ENCODE measurements at regions of chr21 and their contacts with region 1.

Region 1: GRCh38 chr21:25385911-25386474 is 221.3 kb downstream of the MRPL39 start:
- DNase-seq: peak; percentile 77
- ATAC-seq: peak; percentile 84
- H3K4me3 ChIP-seq: no peak overlapping the region
- H3K27ac ChIP-seq: no peak overlapping the region
- H3K4me1 ChIP-seq: no peaks in the 10 kb centered on the region
- H3K27me3 ChIP-seq: no peaks in the 10 kb centered on the region
- CTCF ChIP-seq: peak; percentile 85
- POLR2A ChIP-seq: no peak
- RAD21 ChIP-seq: peak; percentile 90

Region 2: DNA sequence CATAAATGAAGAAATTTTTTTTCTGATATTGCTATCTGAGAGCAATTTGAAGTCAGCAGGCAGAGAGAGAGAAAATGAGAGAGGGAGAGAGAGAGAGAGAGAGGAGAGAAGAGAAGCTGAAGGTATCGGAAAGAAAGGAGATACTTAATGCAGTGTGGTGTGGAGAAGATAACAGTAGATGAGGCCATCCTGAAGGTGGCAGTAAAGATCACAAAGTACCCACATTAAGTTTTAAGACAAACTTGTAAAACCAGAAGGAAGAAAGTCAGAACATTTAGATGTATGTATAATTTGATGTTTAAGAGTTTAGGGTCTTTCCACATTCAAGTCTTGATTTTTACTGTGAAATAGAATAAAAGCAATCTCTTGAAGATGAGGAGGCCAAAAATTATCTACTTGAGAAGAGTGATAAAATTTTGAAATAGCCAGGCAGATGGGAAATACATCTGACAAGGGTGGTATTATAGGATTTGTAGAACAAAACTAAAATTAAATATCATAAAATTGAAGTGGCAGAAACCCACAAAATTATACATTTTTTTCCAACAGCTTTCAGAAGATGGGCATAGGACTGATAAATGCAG is 1532.1 kb before region 1 on chr21:
- CTCF ChIA-PET with region 1: no interaction called
- POLR2A ChIA-PET with region 1: no interaction called
- dilution Hi-C with region 1: no loop called
- in situ Hi-C with region 1: no loop called
- intact Hi-C with region 1: loop called (anchors 10 kb)
- DNase-seq: peak; percentile 31
- ATAC-seq: peak; percentile 66
- H3K4me3 ChIP-seq: no peak overlapping the region
- H3K27ac ChIP-seq: no peak overlapping the region
- H3K4me1 ChIP-seq: no peaks in the 10 kb centered on the region
- H3K27me3 ChIP-seq: no peaks in the 10 kb centered on the region
- CTCF ChIP-seq: peak; percentile 51
- POLR2A ChIP-seq: no peak
- RAD21 ChIP-seq: peak; percentile 50

Region 3: DNA sequence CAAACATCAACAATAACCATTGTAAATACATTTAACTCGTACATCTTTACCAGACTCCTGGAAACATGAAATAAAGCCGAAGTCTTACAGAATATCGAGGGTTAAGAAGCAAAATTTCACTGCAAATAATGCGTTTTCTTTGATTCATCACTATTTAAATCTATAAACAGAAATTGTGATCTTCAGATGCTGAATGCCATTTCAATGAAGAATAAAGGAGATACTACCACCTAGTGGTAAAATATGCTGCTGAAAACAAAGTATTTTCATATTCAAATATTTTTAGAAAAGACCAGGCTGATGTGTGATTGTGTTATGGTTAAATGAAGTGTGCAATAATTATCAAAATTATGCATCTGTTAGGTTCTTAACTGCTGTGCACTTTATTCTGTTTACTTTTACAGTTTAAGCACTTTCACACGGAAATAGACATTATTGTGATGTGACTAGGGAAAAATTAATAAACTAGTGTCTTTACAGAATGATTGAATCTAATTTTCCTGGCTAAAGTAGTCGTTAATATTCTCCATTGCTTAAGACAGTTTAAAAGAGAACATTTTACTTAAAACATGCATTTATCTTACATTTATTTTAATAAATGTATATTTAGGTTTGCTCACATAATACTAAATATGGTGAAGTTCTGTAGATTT is 871.8 kb before region 1 on chr21:
- CTCF ChIA-PET with region 1: no interaction called
- POLR2A ChIA-PET with region 1: no interaction called
- dilution Hi-C with region 1: no loop called
- in situ Hi-C with region 1: no loop called
- intact Hi-C with region 1: loop called (anchors 5 kb)
- DNase-seq: peak; percentile 27
- ATAC-seq: no peak; the same call in 1 of the 2 replicates
- H3K4me3 ChIP-seq: no peak overlapping the region
- H3K27ac ChIP-seq: no peak overlapping the region
- H3K4me1 ChIP-seq: no peaks in the 10 kb centered on the region
- H3K27me3 ChIP-seq: no peaks in the 10 kb centered on the region
- CTCF ChIP-seq: peak; percentile 73
- POLR2A ChIP-seq: no peak
- RAD21 ChIP-seq: peak; percentile 71

Region 4: GRCh38 chr21:25254491-25255174 is 131.4 kb before region 1 on chr21:
- CTCF ChIA-PET with region 1: no interaction called
- POLR2A ChIA-PET with region 1: no interaction called
- dilution Hi-C with region 1: no loop called
- in situ Hi-C with region 1: no loop called
- intact Hi-C with region 1: no loop called
- DNase-seq: no peak
- ATAC-seq: no peak
- H3K4me3 ChIP-seq: no peak overlapping the region
- H3K27ac ChIP-seq: no peak overlapping the region
- H3K4me1 ChIP-seq: no peaks in the 10 kb centered on the region
- H3K27me3 ChIP-seq: no peaks in the 10 kb centered on the region
- CTCF ChIP-seq: no peak
- POLR2A ChIP-seq: no peak
- RAD21 ChIP-seq: no peak

Region 5: DNA sequence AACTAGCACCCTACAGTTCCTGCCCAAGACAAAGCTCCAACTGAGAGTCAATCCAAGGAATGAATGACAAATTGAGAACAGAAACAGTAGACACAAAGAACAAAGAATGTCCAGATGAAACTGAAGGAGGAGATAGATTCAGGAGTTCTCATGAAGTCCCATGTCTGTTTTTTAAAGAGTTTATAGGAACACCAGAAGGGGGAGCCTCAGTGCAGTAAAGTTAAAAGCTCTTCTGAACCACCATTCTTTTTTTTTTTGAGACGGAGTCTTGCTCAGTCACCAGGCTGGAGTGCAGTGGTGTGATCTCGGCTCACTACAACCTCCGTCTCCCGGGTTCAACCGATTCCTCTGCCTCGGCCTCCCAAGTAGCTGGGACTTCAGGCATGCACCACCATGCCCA is 102.3 kb before region 1 on chr21:
- CTCF ChIA-PET with region 1: interaction called, 12 read pairs
- POLR2A ChIA-PET with region 1: no interaction called
- dilution Hi-C with region 1: no loop called
- in situ Hi-C with region 1: no loop called
- intact Hi-C with region 1: loop called (anchors 1 kb)
- DNase-seq: peak; percentile 56
- ATAC-seq: peak; percentile 81
- H3K4me3 ChIP-seq: no peak overlapping the region
- H3K27ac ChIP-seq: no peak overlapping the region
- H3K4me1 ChIP-seq: no peaks in the 10 kb centered on the region
- H3K27me3 ChIP-seq: no peaks in the 10 kb centered on the region
- CTCF ChIP-seq: peak; percentile 58
- POLR2A ChIP-seq: no peak
- RAD21 ChIP-seq: peak; percentile 52

Region 6: DNA sequence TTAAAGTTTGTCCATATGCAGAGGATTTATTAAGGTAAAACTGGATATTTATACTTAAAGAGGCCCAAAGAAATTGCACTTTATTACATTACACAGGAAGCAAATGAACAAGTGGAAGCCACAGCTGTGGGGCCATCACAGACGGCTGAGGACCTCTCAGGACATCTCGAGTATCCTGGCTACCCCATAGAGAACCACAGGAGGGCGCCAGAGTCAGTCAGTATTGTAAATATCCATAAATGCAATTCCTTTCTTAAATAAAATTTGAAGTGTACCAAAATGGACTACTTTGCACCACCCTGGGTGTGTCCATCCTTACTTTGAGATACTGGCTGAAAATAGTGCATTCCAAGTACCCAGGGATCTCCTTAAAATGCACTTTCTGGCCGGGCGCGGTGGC is 35.9 kb before region 1 on chr21:
- CTCF ChIA-PET with region 1: interaction called, 12 read pairs
- POLR2A ChIA-PET with region 1: no interaction called
- dilution Hi-C with region 1: no loop called
- in situ Hi-C with region 1: no loop called
- intact Hi-C with region 1: loop called (anchors 1 kb)
- DNase-seq: peak; percentile 60
- ATAC-seq: peak; percentile 75
- H3K4me3 ChIP-seq: no peak overlapping the region
- H3K27ac ChIP-seq: no peak overlapping the region
- H3K4me1 ChIP-seq: no peaks in the 10 kb centered on the region
- H3K27me3 ChIP-seq: no peaks in the 10 kb centered on the region
- CTCF ChIP-seq: peak; percentile 75
- POLR2A ChIP-seq: no peak
- RAD21 ChIP-seq: peak; percentile 75

Region 7: GRCh38 chr21:25457411-25457810 is 71.4 kb after region 1 on chr21:
- CTCF ChIA-PET with region 1: no interaction called
- POLR2A ChIA-PET with region 1: no interaction called
- dilution Hi-C with region 1: no loop called
- in situ Hi-C with region 1: no loop called
- intact Hi-C with region 1: no loop called
- DNase-seq: peak; percentile 85
- ATAC-seq: peak; percentile 73; the same call in 1 of the 2 replicates
- H3K4me3 ChIP-seq: no peak overlapping the region
- H3K27ac ChIP-seq: no peak overlapping the region
- H3K4me1 ChIP-seq: peaks cover 2% of the 10 kb centered on the region; the same call in 1 of the 2 replicates
- H3K27me3 ChIP-seq: no peaks in the 10 kb centered on the region
- CTCF ChIP-seq: no peak
- POLR2A ChIP-seq: no peak
- RAD21 ChIP-seq: no peak